ENCODE measurements at regions of chr15 and their contacts with region 1.

Region 1: GRCh38 chr15:74768771-74769342 is 13.0 kb upstream of the CSK start:
- DNase-seq: peak; percentile 58
- H3K4me3 ChIP-seq: no peak overlapping the region
- H3K27ac ChIP-seq: no peak overlapping the region
- H3K4me1 ChIP-seq: peaks cover 2% of the 10 kb centered on the region
- H3K27me3 ChIP-seq: peaks cover 0 to 2% of the 10 kb centered on the region in 2 experiments
- CTCF ChIP-seq: peak; percentile 71 to 72
- POLR2A ChIP-seq: no peak

Region 2: GRCh38 chr15:74540761-74541493 is 227.9 kb before region 1 on chr15 and contains the start of gene ARID3B:
- CTCF ChIA-PET with region 1: no interaction called
- POLR2A ChIA-PET with region 1: no interaction called
- dilution Hi-C with region 1: no loop called
- intact Hi-C with region 1: loop called (anchors 10 kb)
- DNase-seq: peak; percentile 94
- H3K4me3 ChIP-seq: peak within 1 kb of the TSS; percentile 87 to 98 (median 94)
- H3K27ac ChIP-seq: peak within 1 kb of the TSS; percentile 67
- H3K4me1 ChIP-seq: peaks cover 17% of the 10 kb centered on the region
- H3K27me3 ChIP-seq: no peaks in the 10 kb centered on the region
- CTCF ChIP-seq: no peak
- POLR2A ChIP-seq: peak; percentile 89
- total RNA-seq, gene ARID3B: 9.5 and 10.0 TPM in 2 replicates

Region 3: DNA sequence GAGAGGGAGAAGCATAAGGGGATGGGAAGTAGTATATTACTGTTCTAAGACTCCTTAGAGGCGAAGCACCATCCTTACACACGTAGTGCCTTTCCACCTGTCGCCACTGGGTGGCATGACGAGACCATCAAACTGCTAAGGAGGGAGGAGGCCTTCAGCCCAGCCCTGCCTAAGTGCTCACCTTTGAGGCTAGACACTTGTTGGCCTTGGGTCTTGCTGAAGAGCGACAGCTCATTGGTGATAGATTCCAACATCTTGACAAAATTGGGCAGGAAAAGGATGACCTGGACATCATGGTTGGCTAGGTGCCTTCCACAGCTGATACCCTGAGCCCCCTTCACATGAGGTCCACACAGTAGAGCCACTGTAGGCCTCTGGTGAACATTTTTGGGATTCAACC is 133.6 kb before region 1 on chr15:
- CTCF ChIA-PET with region 1: interaction called, 696 read pairs
- POLR2A ChIA-PET with region 1: no interaction called
- dilution Hi-C with region 1: loop called (anchors 25 kb)
- intact Hi-C with region 1: loop called (anchors 1 kb)
- DNase-seq: peak; percentile 76
- H3K4me3 ChIP-seq: no peak overlapping the region
- H3K27ac ChIP-seq: no peak overlapping the region
- H3K4me1 ChIP-seq: no peaks in the 10 kb centered on the region
- H3K27me3 ChIP-seq: no peaks in the 10 kb centered on the region
- CTCF ChIP-seq: peak; percentile 82 to 89
- POLR2A ChIP-seq: no peak

Region 4: GRCh38 chr15:74723754-74724334 is 45.0 kb before region 1 on chr15:
- CTCF ChIA-PET with region 1: interaction called, 19 read pairs
- POLR2A ChIA-PET with region 1: no interaction called
- dilution Hi-C with region 1: no loop called
- intact Hi-C with region 1: no loop called
- DNase-seq: peak; percentile 62
- H3K4me3 ChIP-seq: no peak overlapping the region
- H3K27ac ChIP-seq: no peak overlapping the region
- H3K4me1 ChIP-seq: peaks cover 12% of the 10 kb centered on the region
- H3K27me3 ChIP-seq: peaks cover 0 to 2% of the 10 kb centered on the region in 2 experiments
- CTCF ChIP-seq: no peak
- POLR2A ChIP-seq: no peak

Region 5: DNA sequence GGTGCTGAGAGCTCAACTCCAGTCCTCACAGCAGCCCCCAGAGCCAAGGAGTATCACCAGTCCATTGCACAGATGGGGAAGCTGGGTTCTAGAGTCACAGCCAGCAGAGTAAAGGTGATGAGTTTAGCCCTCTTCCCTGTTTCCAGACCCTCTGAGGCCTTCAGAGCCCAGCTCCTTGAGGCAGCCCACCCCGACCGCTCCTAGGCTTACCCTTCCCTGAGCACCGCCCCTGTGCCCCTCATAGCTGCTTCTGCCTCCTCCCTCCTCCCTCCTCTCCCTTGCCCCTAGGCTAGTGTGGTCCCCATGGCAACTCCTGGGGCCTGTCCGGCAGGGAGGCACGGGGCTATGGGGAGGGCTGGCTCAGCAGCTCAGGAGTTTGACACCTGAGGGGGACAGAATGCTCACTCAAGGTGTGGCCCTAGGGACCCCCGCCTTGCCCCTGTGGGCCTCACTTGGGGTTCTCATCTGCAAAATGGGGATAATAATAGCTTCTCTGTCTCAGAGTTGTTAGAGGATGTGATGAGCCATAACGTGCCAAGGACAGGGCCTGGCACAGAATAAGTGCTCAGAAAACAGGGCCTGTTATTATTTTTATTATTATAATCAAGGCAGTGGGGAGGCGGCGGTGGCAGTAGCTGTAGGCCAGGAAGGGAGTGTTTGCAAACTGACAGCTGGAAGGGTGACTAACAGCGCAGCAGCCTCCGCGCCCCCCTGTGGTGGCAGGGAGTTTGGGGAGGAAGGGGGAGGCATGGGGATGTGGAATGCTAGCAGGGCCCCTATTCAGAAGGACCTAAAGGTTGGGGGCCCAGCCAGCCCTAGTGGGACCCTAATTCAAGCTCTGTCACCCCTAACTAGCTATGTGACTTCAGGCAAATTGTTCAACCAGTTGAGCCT is 24.5 kb after region 1 on chr15:
- CTCF ChIA-PET with region 1: interaction called, 69 read pairs
- POLR2A ChIA-PET with region 1: no interaction called
- dilution Hi-C with region 1: no loop called
- intact Hi-C with region 1: no loop called
- DNase-seq: no peak
- H3K4me3 ChIP-seq: no peak overlapping the region
- H3K27ac ChIP-seq: no peak overlapping the region
- H3K4me1 ChIP-seq: peaks cover 6% of the 10 kb centered on the region
- H3K27me3 ChIP-seq: no peaks in the 10 kb centered on the region
- CTCF ChIP-seq: peak in 1 of 2 donors; percentile 12
- POLR2A ChIP-seq: no peak

Region 6: GRCh38 chr15:74835307-74835823 is 66.5 kb after region 1 on chr15:
- CTCF ChIA-PET with region 1: interaction called, 28 read pairs
- POLR2A ChIA-PET with region 1: no interaction called
- dilution Hi-C with region 1: no loop called
- intact Hi-C with region 1: loop called (anchors 1 kb)
- DNase-seq: peak; percentile 51
- H3K4me3 ChIP-seq: no peak overlapping the region
- H3K27ac ChIP-seq: no peak overlapping the region
- H3K4me1 ChIP-seq: no peaks in the 10 kb centered on the region
- H3K27me3 ChIP-seq: no peaks in the 10 kb centered on the region
- CTCF ChIP-seq: peak; percentile 86 to 87
- POLR2A ChIP-seq: no peak

Region 7: GRCh38 chr15:74988007-74988800 is 219.3 kb after region 1 on chr15:
- CTCF ChIA-PET with region 1: interaction called, 19 read pairs
- POLR2A ChIA-PET with region 1: no interaction called
- dilution Hi-C with region 1: no loop called
- intact Hi-C with region 1: loop called (anchors 1 kb)
- DNase-seq: peak; percentile 53
- H3K4me3 ChIP-seq: no peak overlapping the region
- H3K27ac ChIP-seq: no peak overlapping the region
- H3K4me1 ChIP-seq: peaks cover 4% of the 10 kb centered on the region
- H3K27me3 ChIP-seq: peaks cover 6% of the 10 kb centered on the region in 2 experiments
- CTCF ChIP-seq: peak; percentile 51 to 70
- POLR2A ChIP-seq: no peak

Measured in endothelial cell of umbilical vein (primary cell).